Spleen (tissue), 13 donors: ENCODE measurements at regions of chr7 and their contacts with region 1.

Region 1: GRCh38 chr7:128209229-128210035 is 31.6 kb upstream of the LEP start:
- DNase-seq: peak; percentile 92
- H3K4me3 ChIP-seq: peak overlapping the region in 1 of 8 donors; percentile 17
- H3K27ac ChIP-seq: no peak overlapping the region
- H3K4me1 ChIP-seq: peaks cover 0 to 21% (median 13%) of the 10 kb centered on the region in 6 donors
- H3K27me3 ChIP-seq: peaks cover 0 to 54% (median 0%) of the 10 kb centered on the region in 7 donors
- CTCF ChIP-seq: peak; percentile 94 to 99 (median 98)
- POLR2A ChIP-seq: no peak

Region 2: DNA sequence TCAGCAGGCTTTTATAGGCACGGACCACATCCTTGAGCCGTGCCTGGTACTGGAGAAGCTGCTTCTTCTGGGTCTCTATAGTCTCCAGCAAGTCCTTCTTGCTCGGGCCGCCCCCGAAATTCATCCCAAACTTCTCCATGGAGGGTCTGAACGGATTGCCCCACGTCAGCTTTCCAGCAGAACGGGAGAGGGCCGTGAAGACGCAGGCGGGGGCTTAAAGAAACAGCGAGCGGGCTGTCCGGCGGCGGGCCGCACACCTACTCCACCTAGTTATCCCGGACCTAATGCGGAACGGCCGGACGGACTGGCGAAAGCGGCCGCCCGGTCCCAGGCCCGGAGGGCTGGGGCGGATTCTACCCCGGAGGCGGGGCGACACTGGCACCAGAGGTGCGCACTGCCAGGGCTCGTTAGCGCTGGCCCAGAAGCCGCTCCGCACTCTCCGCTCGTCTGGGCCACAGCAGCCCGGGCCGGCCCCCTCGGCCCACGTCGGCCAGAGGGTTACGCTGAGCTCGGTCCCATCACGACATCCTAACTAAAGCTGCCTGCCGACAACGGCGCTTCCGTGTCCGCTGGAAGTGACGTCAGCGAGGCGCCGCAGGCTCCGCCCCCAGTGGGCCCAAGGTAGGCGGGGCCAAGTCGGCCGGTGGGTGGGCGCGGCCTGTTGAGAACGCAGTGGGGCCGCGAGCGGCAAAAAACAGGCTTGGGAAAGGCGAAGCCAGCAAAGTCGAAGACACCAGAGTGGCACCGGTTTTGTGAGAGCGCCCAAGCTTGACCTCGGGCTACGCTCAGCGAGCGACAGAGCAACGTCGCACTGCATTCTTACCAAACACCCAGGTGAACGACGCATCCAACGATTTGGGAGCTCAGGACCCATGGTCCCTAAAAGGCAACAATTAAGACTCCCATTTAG is 624.1 kb before region 1 on chr7 and contains the start of gene GCC1:
- intact Hi-C with region 1: loop called (anchors 10 kb)
- DNase-seq: peak; percentile 98
- H3K4me3 ChIP-seq: peak within 1 kb of the TSS; percentile 69 to 88 (median 78)
- H3K27ac ChIP-seq: peak within 1 kb of the TSS; percentile 83 to 97 (median 92)
- H3K4me1 ChIP-seq: peaks cover 44 to 88% (median 76%) of the 10 kb centered on the region in 6 donors
- H3K27me3 ChIP-seq: no peaks in the 10 kb centered on the region
- CTCF ChIP-seq: peak in 2 of 11 experiments; percentile 7 to 19
- POLR2A ChIP-seq: peak in 1 of 3 donors; percentile 71
- total RNA-seq, gene GCC1: 13.5 to 24.8 (median 17.9) TPM

Region 3: DNA sequence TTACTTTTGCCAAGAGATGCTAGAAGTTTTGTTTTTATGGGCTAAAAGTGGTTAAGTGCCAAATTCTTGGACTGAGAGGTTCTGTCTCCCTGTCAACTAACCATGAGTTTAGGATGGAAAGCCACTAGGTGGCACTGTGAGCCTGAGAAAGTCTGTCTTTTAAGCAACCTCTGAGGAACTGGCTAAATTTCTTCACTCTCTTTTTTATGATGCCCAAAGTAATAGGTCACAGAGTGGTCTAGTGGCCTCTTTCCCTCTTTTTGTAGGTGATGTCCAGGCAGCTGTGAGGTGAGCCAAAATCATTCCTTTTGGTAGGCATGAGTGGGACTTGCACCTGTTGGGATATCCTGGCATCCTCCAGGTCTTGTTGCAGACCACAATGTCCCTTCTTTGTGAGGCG is 500.6 kb before region 1 on chr7:
- intact Hi-C with region 1: loop called (anchors 2 kb)
- DNase-seq: no peak
- H3K4me3 ChIP-seq: no peak overlapping the region
- H3K27ac ChIP-seq: no peak overlapping the region
- H3K4me1 ChIP-seq: peaks cover 0 to 9% (median 3%) of the 10 kb centered on the region in 6 donors
- H3K27me3 ChIP-seq: no peaks in the 10 kb centered on the region
- CTCF ChIP-seq: peak; percentile 62 to 86 (median 80)
- POLR2A ChIP-seq: no peak

Region 4: DNA sequence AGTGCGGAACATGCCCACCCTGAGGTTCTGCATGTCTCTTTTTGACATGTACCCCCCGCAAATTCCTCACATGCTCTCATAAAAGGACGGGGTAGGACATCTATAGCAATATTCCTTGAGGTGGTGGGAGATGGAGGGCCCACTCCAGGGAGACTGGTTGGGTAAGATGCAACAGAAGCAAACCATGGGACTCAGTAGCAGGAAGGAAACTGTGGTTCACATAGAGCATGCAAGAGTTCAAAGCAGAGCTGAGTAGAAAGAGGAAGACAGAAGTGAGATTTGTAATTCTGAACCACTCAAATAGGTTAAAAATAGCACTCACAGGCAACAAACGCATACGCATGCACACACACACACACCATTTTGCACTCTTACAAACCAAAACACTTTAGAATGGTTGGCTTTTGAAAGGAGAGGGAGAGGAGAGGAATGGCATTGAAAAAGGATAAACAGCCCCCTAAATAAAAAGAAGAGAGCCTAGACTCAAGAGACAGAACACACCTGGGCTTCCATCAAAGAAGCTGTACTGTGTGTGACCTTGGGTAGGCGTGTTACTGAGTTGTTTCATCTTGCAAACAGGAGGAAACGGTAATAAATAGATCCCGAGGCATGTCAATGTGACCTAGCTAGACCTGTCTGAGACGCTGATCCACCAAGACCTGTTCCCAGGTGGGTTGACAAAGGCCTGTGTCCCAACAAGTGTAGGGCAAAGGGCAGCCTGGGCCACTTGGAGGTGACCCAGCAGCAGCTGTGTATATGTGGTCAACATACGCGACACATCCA is 100.6 kb before region 1 on chr7:
- intact Hi-C with region 1: no loop called
- DNase-seq: peak; percentile 80
- H3K4me3 ChIP-seq: peak overlapping the region in 1 of 8 donors; percentile 36
- H3K27ac ChIP-seq: peak overlapping the region; percentile 66 to 89 (median 82)
- H3K4me1 ChIP-seq: peaks cover 37 to 87% (median 63%) of the 10 kb centered on the region in 6 donors
- H3K27me3 ChIP-seq: peaks cover 0 to 14% (median 0%) of the 10 kb centered on the region in 7 donors
- CTCF ChIP-seq: no peak
- POLR2A ChIP-seq: no peak

Region 5: GRCh38 chr7:128135515-128136214 is 73.8 kb before region 1 on chr7:
- intact Hi-C with region 1: loop called (anchors 5 kb)
- DNase-seq: peak; percentile 91
- H3K4me3 ChIP-seq: peak overlapping the region; percentile 30 to 75 (median 54)
- H3K27ac ChIP-seq: peak overlapping the region in 4 of 8 donors; percentile 10 to 32 (median 22)
- H3K4me1 ChIP-seq: peaks cover 8 to 31% (median 22%) of the 10 kb centered on the region in 6 donors
- H3K27me3 ChIP-seq: peaks cover 0 to 52% (median 10%) of the 10 kb centered on the region in 7 donors
- CTCF ChIP-seq: peak; percentile 1 to 98 (median 91)
- POLR2A ChIP-seq: no peak